Naive thymus-derived CD4-positive, alpha-beta T cell (primary cell): ENCODE measurements at regions of chr14 and their contacts with region 1.

Region 1: DNA sequence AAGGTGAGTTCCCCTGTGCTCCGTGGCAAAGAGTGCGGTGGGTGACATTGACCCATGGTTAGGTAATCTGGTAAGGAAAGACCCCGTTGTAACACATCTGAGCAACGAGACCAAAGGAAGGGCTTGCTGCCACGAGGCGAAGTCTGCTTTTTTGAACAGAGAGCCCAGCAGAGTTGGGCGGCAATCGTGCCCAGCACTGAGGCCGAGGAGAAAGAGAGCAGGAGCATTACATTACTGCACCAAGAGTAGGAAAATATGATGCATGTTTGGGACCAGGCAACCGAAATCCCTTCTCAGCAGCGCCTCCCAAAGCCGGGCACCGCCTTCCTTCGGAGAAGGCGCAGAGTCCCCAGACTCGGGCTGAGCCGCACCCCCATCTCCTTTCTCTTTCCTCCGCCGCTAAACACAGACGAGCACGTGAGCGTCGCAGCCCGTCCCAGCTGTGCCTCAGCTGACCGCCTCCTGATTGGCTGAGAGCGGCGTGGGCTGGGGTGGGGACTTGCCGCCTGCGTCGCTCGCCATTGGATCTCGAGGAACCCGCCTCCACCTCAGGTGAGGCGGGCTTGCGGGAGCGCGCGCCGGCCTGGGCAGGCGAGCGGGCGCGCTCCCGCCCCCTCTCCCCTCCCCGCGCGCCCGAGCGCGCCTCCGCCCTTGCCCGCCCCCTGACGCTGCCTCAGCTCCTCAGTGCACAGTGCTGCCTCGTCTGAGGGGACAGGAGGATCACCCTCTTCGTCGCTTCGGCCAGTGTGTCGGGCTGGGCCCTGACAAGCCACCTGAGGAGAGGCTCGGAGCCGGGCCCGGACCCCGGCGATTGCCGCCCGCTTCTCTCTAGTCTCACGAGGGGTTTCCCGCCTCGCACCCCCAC is at the start of gene HIF1A:
- DNase-seq: peak; percentile 83 to 98 (median 96)
- ATAC-seq: peak; percentile 97
- H3K4me3 ChIP-seq: peak within 1 kb of the TSS; percentile 92
- H3K4me3 Mint-ChIP-seq: peak within 1 kb of the TSS; percentile 95 to 99 (median 98)
- H3K27ac ChIP-seq: peak within 1 kb of the TSS; percentile 99
- H3K27ac Mint-ChIP-seq: peak within 1 kb of the TSS; percentile 96 to 99 (median 99)
- H3K4me1 ChIP-seq: peaks cover 9 to 17% of the 10 kb centered on the region in 2 donors
- H3K4me1 Mint-ChIP-seq: peaks cover 36 to 69% (median 62%) of the 10 kb centered on the region in 7 donors
- H3K27me3 ChIP-seq: no peaks in the 10 kb centered on the region
- H3K27me3 Mint-ChIP-seq: peaks cover 0 to 2% (median 0%) of the 10 kb centered on the region in 5 donors
- total RNA-seq, gene HIF1A: 88.8 to 358 (median 143) TPM

Region 2: DNA sequence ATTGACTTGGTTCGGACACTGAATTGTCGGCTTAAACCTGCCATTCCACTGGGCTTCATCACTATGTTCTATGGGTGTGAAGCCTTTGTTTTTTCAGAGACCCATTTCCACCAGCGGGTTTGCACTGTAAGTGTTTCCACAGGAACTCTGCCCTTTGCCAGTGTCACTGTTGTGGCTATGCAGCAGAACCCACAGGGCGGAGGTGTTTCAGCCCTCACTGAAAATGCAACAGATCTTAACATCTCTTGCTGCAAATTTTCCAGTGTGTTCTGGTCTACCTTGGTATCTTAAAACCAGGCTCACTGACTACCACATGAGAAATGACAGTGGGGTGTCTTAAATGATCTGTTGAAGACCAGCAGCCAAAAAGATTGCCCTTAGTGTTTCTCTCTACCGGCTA is 352.6 kb before region 1 on chr14:
- CTCF ChIA-PET with region 1: no interaction called
- POLR2A ChIA-PET with region 1: interaction called, 5 read pairs
- intact Hi-C with region 1: loop called (anchors 5 kb)
- DNase-seq: peak; percentile 46 to 91 (median 87)
- ATAC-seq: peak; percentile 76
- H3K4me3 ChIP-seq: peak overlapping the region; percentile 28
- H3K4me3 Mint-ChIP-seq: peak overlapping the region; percentile 76 to 97 (median 82)
- H3K27ac ChIP-seq: peak overlapping the region; percentile 76
- H3K27ac Mint-ChIP-seq: peak overlapping the region in 8 of 9 donors; percentile 92 to 100 (median 98)
- H3K4me1 ChIP-seq: peaks cover 92% of the 10 kb centered on the region in 2 donors
- H3K4me1 Mint-ChIP-seq: peaks cover 18 to 94% (median 82%) of the 10 kb centered on the region in 7 donors
- H3K27me3 ChIP-seq: no peaks in the 10 kb centered on the region
- H3K27me3 Mint-ChIP-seq: no peaks in the 10 kb centered on the region

Region 3: GRCh38 chr14:61644834-61645233 is 50.2 kb before region 1 on chr14:
- CTCF ChIA-PET with region 1: no interaction called
- POLR2A ChIA-PET with region 1: interaction called, 3 read pairs
- intact Hi-C with region 1: loop called in 1 of 2 experiments (anchors 1 kb)
- DNase-seq: peak in 1 of 9 donors; percentile 18
- ATAC-seq: no peak
- H3K4me3 ChIP-seq: no peak overlapping the region
- H3K4me3 Mint-ChIP-seq: no peak overlapping the region
- H3K27ac ChIP-seq: no peak overlapping the region
- H3K27ac Mint-ChIP-seq: peak overlapping the region in 2 of 9 donors; percentile 17 to 38
- H3K4me1 ChIP-seq: peaks cover 8 to 16% of the 10 kb centered on the region in 2 donors
- H3K4me1 Mint-ChIP-seq: peaks cover 18 to 57% (median 33%) of the 10 kb centered on the region in 7 donors
- H3K27me3 ChIP-seq: no peaks in the 10 kb centered on the region
- H3K27me3 Mint-ChIP-seq: peaks cover 0 to 2% (median 0%) of the 10 kb centered on the region in 5 donors

Region 4: DNA sequence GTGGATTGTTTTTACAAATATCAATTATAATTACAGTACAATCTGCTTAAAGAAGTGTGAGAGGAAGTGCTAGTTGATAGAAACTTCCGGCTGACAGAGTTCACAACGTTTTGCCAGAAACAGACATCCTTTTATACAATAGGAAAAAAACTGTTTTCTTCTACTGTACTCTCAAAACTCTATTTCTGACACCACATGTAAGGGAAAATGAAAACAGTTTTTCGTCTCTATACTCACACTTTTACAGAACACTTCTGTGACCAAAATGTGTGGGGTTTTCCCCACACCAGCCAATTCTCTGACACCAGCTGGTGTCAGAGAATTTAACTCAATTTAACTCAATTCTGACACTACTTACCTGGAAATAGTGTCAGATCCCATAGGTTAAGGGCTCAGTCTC is 24.0 kb before region 1 on chr14:
- CTCF ChIA-PET with region 1: interaction called, 3 read pairs
- POLR2A ChIA-PET with region 1: interaction called, 22 read pairs
- intact Hi-C with region 1: loop called (anchors 1 kb)
- DNase-seq: peak in 7 of 9 donors; percentile 67 to 87 (median 82)
- ATAC-seq: peak; percentile 97
- H3K4me3 ChIP-seq: peak overlapping the region; percentile 24
- H3K4me3 Mint-ChIP-seq: peak overlapping the region in 1 of 10 donors; percentile 68
- H3K27ac ChIP-seq: peak overlapping the region; percentile 85
- H3K27ac Mint-ChIP-seq: no peak overlapping the region
- H3K4me1 ChIP-seq: peaks cover 29 to 66% of the 10 kb centered on the region in 2 donors
- H3K4me1 Mint-ChIP-seq: peaks cover 5 to 23% (median 18%) of the 10 kb centered on the region in 7 donors
- H3K27me3 ChIP-seq: no peaks in the 10 kb centered on the region
- H3K27me3 Mint-ChIP-seq: no peaks in the 10 kb centered on the region

Region 5: DNA sequence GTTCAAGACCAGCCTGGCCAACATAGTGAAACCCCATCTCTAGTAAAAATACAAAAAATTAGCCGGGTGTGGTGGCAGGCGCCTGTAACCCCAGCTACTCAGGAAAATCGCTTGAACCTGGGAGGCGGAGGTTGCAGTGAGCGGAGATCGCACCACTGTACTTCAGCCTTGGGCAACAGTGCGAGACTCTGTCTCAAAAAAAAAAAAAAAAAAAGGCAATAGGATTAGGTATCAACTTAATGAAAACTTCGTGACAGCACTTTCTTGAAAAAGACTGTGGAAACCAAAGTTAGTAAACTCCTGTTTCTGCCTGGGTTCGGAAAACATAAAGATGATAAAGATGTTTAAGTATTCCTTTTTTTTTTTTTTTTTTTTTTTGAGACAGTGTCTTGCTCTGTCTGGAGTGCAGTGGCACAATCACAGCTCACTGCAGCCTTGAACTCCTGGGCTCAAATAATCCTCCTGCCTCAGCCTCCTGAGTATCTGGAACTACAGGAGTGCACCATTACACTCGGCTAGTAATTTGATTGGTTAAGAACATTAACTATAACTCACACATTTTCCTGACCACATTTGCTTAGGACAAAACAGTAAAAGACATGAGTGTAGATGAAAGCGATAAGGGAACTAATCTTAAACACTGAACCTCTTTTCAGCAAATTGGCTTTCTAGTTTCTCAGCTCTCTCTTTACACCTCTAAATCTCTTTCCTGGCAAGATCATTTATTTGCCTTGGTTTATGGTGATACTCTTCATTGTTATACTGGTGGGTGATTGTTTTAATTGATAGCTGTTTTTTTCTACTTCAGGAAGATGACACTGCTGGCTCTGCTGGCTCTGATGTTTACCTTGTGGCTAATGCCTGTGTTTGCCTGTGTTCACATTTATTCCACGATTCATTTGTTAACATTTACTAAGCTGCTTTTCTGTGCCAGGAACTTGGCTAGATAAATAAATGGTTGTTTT is 16.1 kb after region 1 on chr14:
- CTCF ChIA-PET with region 1: no interaction called
- POLR2A ChIA-PET with region 1: interaction called, 9 read pairs
- intact Hi-C with region 1: loop called (anchors 1 kb)
- DNase-seq: no peak
- ATAC-seq: peak; percentile 24
- H3K4me3 ChIP-seq: no peak overlapping the region
- H3K4me3 Mint-ChIP-seq: peak overlapping the region; percentile 20 to 73 (median 50)
- H3K27ac ChIP-seq: no peak overlapping the region
- H3K27ac Mint-ChIP-seq: peak overlapping the region; percentile 10 to 76 (median 54)
- H3K4me1 ChIP-seq: peaks cover 21 to 57% of the 10 kb centered on the region in 2 donors
- H3K4me1 Mint-ChIP-seq: peaks cover 49 to 93% (median 80%) of the 10 kb centered on the region in 7 donors
- H3K27me3 ChIP-seq: no peaks in the 10 kb centered on the region
- H3K27me3 Mint-ChIP-seq: no peaks in the 10 kb centered on the region

Region 6: DNA sequence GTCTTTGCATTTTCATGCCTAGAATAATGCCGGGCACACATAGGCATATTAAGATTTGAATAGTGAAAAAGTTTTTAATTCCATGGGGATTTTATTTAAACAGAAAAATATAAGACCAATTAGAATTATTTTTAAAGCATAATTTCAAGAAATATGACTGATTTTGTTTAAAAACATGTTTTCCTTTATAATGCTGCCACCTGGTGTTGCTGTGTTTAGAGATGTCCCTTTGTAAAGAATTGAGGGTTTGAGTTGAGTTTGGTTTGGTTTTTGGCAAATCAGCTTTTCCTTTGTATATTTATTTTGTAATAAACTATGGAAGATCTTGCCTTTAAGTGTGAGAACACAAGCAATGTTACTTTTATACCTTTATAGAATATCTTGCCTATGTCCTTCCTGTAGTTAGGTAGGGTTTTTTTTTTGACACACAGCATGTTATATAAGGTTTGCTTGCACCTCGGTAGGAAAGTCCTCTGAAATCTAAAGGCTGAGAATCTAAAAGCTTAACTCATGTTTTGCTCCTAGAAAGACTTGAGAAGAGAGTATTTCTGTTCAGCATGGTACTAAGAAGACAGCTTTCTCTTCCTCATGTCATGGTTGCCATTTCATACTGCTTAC is 35.8 kb after region 1 on chr14:
- CTCF ChIA-PET with region 1: no interaction called
- POLR2A ChIA-PET with region 1: interaction called, 5 read pairs
- intact Hi-C with region 1: loop called in 1 of 2 experiments (anchors 5 kb)
- DNase-seq: peak in 6 of 9 donors; percentile 25 to 51 (median 46)
- ATAC-seq: peak; percentile 39
- H3K4me3 ChIP-seq: no peak overlapping the region
- H3K4me3 Mint-ChIP-seq: peak overlapping the region in 1 of 10 donors; percentile 9
- H3K27ac ChIP-seq: no peak overlapping the region
- H3K27ac Mint-ChIP-seq: peak overlapping the region; percentile 9 to 76 (median 38)
- H3K4me1 ChIP-seq: peaks cover 0 to 4% of the 10 kb centered on the region in 2 donors
- H3K4me1 Mint-ChIP-seq: peaks cover 13 to 72% (median 41%) of the 10 kb centered on the region in 7 donors
- H3K27me3 ChIP-seq: no peaks in the 10 kb centered on the region
- H3K27me3 Mint-ChIP-seq: no peaks in the 10 kb centered on the region

Region 7: DNA sequence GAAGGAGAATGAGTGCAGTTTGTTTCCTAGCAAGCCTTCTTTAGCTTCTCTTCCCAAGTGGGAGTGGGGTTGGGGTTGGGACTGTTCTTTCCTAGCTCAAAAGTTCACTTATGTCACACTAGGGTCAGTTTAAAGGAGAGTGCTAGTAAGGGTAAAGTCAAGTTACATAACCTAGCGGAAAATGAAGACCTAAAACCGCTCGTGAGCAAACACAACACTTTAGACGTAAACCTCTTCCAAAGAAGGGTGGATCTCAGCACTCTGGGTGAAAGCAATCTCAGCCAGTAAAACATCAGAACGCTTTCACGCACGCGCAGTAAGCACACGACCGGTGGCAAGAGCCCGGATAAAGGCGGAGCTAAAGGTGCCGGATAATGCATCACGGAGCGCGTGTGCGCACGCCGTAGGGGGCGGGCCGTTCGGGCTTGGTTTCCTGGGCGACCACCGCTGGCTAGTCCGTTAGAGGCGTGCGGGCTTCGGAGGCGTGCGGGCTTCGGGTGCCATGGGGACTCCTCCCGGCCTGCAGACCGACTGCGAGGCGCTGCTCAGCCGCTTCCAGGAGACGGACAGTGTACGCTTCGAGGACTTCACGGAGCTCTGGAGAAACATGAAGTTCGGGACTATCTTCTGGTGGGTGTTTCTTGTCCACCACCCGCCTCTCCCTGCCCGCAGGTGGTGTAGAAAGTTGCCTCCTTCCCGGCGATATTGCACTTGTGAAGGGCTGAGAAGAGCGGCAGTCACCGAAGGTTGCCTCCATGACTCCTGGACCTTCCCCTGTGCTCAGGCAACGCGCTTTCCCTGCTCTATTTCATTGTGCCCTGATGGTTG is 67.1 kb after region 1 on chr14 and contains the start of gene SNAPC1:
- CTCF ChIA-PET with region 1: no interaction called
- POLR2A ChIA-PET with region 1: interaction called, 6 read pairs
- intact Hi-C with region 1: loop called (anchors 1 kb)
- DNase-seq: peak; percentile 92 to 98 (median 96)
- ATAC-seq: peak; percentile 97
- H3K4me3 ChIP-seq: peak within 1 kb of the TSS; percentile 94
- H3K4me3 Mint-ChIP-seq: peak within 1 kb of the TSS; percentile 96 to 100 (median 98)
- H3K27ac ChIP-seq: peak within 1 kb of the TSS; percentile 95
- H3K27ac Mint-ChIP-seq: peak within 1 kb of the TSS; percentile 98 to 100 (median 99)
- H3K4me1 ChIP-seq: peaks cover 13 to 17% of the 10 kb centered on the region in 2 donors
- H3K4me1 Mint-ChIP-seq: peaks cover 27 to 62% (median 53%) of the 10 kb centered on the region in 7 donors
- H3K27me3 ChIP-seq: no peaks in the 10 kb centered on the region
- H3K27me3 Mint-ChIP-seq: peaks cover 0 to 4% (median 0%) of the 10 kb centered on the region in 5 donors
- total RNA-seq, gene SNAPC1: 3.5 to 8.7 (median 5.1) TPM

Region 8: DNA sequence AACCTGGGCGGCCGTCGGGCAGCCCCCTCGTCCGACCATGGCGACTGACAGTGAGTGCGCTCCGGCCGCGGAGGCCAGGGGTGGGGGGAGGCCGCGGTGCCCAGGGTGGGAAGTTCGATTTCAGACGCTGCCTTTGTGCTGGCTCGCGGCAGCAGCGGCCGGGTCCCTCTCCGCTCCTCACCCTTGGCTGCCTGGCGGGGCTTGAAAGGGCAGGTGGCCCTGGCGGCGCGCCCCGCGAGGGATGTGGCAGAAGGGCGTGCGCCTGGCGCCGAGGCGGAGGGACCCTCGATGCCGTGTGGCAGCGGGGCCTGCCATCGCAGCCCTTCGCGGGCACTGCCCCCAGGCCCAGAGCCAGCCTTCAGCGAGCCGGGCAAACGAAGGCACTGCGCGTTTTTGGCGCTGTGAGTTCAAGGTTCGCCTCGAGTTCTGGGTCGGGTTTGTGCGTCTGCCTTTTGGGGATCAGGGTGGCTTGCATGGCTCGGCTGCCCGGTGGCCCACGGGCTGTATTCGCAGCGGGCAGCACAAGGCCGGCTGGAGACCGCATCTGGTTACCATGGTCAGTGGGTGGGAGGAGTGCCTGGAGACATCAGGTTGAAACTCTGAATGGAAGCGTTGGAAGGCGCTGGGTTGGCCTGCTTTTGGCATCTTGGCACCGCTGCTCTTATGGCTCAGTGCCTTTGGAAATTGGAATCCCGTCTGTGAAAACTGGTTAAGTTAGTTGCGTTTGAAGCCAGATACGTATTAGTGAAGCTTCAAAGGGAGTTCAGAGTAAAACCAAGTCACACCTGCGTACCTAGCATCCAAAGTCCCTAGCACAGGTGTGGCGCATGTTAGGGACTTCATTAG is 117.9 kb after region 1 on chr14:
- CTCF ChIA-PET with region 1: no interaction called
- POLR2A ChIA-PET with region 1: no interaction called
- intact Hi-C with region 1: no loop called
- DNase-seq: peak in 6 of 9 donors; percentile 6 to 28 (median 12)
- ATAC-seq: peak; percentile 24
- H3K4me3 ChIP-seq: peak overlapping the region; percentile 35
- H3K4me3 Mint-ChIP-seq: peak overlapping the region; percentile 60 to 86 (median 76)
- H3K27ac ChIP-seq: no peak overlapping the region
- H3K27ac Mint-ChIP-seq: peak overlapping the region in 1 of 9 donors; percentile 65
- H3K4me1 ChIP-seq: peaks cover 0 to 5% of the 10 kb centered on the region in 2 donors
- H3K4me1 Mint-ChIP-seq: peaks cover 0 to 14% (median 8%) of the 10 kb centered on the region in 7 donors
- H3K27me3 ChIP-seq: peaks cover 3 to 16% of the 10 kb centered on the region in 2 donors
- H3K27me3 Mint-ChIP-seq: peaks cover 32 to 85% (median 57%) of the 10 kb centered on the region in 5 donors